ENCODE measurements at regions of chr11 and their contacts with region 1.

Region 1: DNA sequence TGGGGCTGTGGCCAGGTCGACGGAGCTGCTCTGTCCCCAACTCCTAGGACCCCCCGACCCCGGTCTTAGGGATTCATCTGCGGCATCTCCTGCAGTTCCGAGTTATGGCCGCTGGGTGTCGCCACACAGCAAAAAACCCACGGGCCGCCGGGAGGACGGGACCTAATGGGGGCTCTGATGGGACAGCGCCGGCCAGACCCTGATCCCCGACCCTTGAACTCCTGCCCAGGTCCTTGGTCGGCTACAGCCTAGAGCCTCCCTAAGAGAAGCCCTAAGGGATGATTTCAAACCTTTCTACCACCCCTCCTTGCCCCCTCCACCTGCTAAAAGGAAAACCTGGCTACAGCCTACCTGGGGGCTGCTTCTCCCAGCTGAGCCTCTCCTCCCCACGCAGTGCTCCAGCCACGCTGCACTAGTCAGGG is 30.8 kb upstream of the LRRC10B start:
- DNase-seq: peak; percentile 43 to 77 (median 63)
- H3K4me3 ChIP-seq: no peak overlapping the region
- H3K27ac ChIP-seq: no peak overlapping the region
- H3K4me1 ChIP-seq: no peaks in the 10 kb centered on the region
- H3K27me3 ChIP-seq: no peaks in the 10 kb centered on the region
- CTCF ChIP-seq: peak; percentile 66 to 88 (median 88)
- EP300 ChIP-seq: no peak
- POLR2A ChIP-seq: no peak

Region 2: DNA sequence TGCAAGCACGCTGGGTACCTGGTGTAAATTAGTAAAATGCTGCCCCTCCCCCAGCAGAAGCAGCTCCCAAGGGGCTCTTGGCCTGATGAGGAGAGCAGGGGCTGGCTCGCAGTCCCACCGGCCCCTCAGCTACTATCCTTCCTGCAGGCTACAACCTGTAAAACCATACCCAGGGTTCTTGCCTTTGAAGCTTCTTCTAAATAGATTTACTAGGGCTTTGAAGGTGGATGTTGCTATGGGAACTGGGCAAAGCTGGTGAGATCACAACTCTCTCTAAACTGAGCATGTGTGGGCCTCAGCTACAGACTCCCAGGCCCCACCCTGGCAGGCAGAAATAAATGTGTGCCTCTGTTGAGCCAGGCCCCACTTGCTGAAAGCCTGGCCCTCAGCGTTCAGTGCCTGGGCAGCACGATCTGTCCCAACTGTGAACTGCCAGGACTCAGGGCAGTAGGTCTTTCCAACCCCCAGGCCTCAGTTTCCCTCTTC is 357.0 kb before region 1 on chr11:
- intact Hi-C with region 1: no loop called
- DNase-seq: no peak
- H3K4me3 ChIP-seq: no peak overlapping the region
- H3K27ac ChIP-seq: no peak overlapping the region
- H3K4me1 ChIP-seq: peaks cover 8% of the 10 kb centered on the region
- H3K27me3 ChIP-seq: no peaks in the 10 kb centered on the region
- CTCF ChIP-seq: no peak
- EP300 ChIP-seq: no peak
- POLR2A ChIP-seq: no peak

Region 3: DNA sequence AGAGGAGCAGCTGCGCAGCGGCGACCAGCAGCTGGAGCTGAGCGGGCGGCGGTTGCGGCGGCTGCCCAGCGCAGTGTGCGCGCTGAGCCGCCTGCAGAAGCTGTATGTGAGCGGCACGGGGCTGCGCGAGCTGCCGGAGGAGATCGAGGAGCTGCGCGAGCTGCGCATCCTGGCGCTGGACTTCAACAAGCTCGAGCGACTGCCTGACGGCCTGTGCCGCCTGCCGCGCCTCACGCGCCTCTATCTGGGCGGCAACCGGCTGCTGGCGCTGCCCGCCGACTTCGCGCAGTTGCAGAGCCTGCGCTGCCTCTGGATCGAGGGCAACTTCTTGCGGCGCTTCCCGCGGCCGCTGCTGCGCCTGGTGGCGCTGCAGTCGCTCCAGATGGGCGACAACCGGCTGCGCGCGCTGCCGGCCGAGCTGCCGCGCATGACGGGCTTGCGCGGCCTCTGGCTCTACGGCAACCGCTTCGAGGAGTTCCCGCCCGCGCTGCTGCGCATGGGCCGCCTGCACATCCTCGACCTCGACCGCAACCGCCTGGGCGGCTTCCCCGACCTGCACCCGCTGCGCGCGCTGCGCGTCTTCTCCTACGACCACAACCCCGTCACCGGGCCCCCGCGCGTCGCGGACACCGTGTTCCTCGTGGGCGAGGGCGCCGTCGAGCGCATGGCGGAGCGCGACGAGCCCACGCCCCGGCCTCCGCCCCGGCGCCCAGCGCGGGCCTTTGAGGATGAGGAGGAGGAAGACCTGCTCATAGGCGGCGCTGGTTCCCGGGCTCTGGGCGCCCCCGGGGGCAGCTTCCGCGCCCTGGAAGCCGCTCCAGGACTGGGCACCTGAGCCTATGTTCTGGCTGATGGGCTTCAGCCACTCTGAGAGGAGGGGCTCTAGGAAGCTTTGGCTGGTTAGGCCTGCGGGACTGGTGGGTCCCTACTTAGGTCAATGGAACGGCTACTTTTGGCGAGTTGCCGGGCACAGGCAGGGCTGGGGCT is 31.6 kb after region 1 on chr11:
- intact Hi-C with region 1: loop called in 2 of 4 experiments (anchors 2 kb)
- DNase-seq: peak in 1 of 5 donors; percentile 61
- H3K4me3 ChIP-seq: no peak overlapping the region
- H3K27ac ChIP-seq: peak overlapping the region in 1 of 2 donors; percentile 8
- H3K4me1 ChIP-seq: peaks cover 2% of the 10 kb centered on the region
- H3K27me3 ChIP-seq: peaks cover 3% of the 10 kb centered on the region
- CTCF ChIP-seq: peak in 2 of 3 donors; percentile 34 to 45
- EP300 ChIP-seq: no peak
- POLR2A ChIP-seq: no peak

Region 4: DNA sequence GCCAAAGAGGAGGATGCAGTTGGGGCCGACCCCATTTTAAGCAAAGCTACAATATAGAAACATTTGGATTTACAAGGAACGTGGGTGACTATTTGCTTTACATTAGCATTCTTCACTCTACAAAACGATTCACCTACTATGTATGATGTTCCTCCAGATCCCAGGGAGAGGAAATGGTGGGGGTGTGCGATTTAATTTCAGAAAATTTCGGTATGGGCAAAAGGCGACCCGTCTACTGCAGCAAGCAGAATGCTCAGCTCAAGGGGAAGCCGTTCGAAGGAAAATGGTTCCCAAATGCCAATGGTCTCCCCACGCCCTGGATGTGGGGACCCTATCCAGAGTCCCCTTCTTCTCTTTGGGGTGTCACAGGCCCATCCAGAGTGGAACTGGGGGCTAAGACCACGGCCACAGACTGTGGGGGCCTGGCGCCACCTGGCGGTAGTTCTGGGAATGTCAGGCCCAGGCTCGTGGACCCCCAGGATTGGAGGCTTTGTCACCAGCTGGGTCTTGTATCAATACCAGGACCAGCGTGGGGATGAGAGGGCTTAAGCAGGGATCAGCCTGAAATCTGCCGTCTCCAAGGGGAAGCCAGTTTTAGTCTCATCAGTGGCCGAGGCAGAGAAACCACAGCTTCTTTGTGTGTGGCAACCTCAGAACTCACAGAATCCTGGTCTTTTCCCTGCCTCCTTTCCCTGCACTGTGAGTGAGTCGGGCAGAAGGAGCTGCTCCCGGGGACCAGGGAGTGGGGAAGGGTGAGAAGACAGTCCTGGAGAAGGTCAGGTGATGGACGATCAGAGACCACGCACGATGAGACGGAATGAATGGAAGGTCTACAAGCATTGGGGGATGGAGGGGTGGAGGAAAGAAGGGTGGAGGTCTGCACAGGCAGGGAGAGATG is 39.2 kb after region 1 on chr11:
- intact Hi-C with region 1: loop called in 3 of 4 experiments (anchors 2 to 5 kb)
- DNase-seq: peak in 4 of 5 donors; percentile 51 to 74 (median 61)
- H3K4me3 ChIP-seq: no peak overlapping the region
- H3K27ac ChIP-seq: no peak overlapping the region
- H3K4me1 ChIP-seq: no peaks in the 10 kb centered on the region
- H3K27me3 ChIP-seq: no peaks in the 10 kb centered on the region
- CTCF ChIP-seq: peak; percentile 94 to 95 (median 95)
- EP300 ChIP-seq: no peak
- POLR2A ChIP-seq: no peak

Region 5: GRCh38 chr11:61577732-61578425 is 100.1 kb after region 1 on chr11:
- intact Hi-C with region 1: loop called in 1 of 4 experiments (anchors 10 kb)
- DNase-seq: no peak
- H3K4me3 ChIP-seq: no peak overlapping the region
- H3K27ac ChIP-seq: no peak overlapping the region
- H3K4me1 ChIP-seq: no peaks in the 10 kb centered on the region
- H3K27me3 ChIP-seq: no peaks in the 10 kb centered on the region
- CTCF ChIP-seq: no peak
- EP300 ChIP-seq: no peak
- POLR2A ChIP-seq: no peak

Region 6: GRCh38 chr11:61627567-61628445 is 150.1 kb after region 1 on chr11:
- intact Hi-C with region 1: loop called in 2 of 4 experiments (anchors 5 to 10 kb)
- DNase-seq: peak; percentile 50 to 83 (median 62)
- H3K4me3 ChIP-seq: no peak overlapping the region
- H3K27ac ChIP-seq: no peak overlapping the region
- H3K4me1 ChIP-seq: no peaks in the 10 kb centered on the region
- H3K27me3 ChIP-seq: no peaks in the 10 kb centered on the region
- CTCF ChIP-seq: peak in 2 of 3 donors; percentile 44 to 60
- EP300 ChIP-seq: no peak
- POLR2A ChIP-seq: no peak

Region 7: DNA sequence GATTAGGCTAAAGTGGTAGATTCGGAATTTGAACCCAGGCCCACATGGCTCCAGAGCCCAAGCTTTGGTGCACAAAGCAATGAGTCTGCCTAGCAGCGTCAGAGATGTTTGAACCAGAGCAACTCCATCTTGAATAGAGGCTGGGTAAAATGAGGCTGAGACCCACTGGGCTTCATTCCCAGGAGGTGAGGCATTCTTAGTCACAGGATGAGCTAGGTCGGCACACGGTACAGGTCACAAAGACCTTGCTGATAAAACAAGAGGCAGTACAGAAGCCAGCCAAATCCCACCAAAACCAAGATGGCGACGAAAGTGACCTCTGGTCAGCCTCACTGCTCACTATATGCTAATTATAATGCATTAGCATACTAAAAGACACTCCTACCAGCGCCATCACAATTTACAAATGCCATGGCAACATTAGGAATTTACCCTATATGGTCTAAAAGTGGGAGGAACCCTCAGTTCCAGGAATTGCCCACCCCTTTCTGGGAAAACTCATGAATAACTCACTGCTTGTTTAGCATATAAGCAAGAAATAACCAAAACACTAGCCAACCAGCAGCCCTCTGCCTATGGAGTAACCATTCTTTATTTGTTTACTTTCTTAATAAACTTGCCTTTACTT is 162.2 kb after region 1 on chr11:
- intact Hi-C with region 1: loop called in 3 of 4 experiments (anchors 5 to 10 kb)
- DNase-seq: no peak
- H3K4me3 ChIP-seq: no peak overlapping the region
- H3K27ac ChIP-seq: no peak overlapping the region
- H3K4me1 ChIP-seq: no peaks in the 10 kb centered on the region
- H3K27me3 ChIP-seq: no peaks in the 10 kb centered on the region
- CTCF ChIP-seq: no peak
- EP300 ChIP-seq: no peak
- POLR2A ChIP-seq: no peak

Region 8: GRCh38 chr11:61733120-61733978 is 255.6 kb after region 1 on chr11:
- intact Hi-C with region 1: loop called in 2 of 4 experiments (anchors 10 kb)
- DNase-seq: peak; percentile 81 to 91 (median 88)
- H3K4me3 ChIP-seq: no peak overlapping the region
- H3K27ac ChIP-seq: no peak overlapping the region
- H3K4me1 ChIP-seq: no peaks in the 10 kb centered on the region
- H3K27me3 ChIP-seq: no peaks in the 10 kb centered on the region
- CTCF ChIP-seq: peak; percentile 95 to 98 (median 97)
- EP300 ChIP-seq: no peak
- POLR2A ChIP-seq: peak; percentile 8

Measured in ovary (tissue), 10 donors.